Activated CD8-positive, alpha-beta memory T cell treated with anti-CD3 and anti-CD28 coated beads, Interleukin-2, amount 10 ng/mL, durations not matched to agents 7 days and 5 days (primary cell): ENCODE measurements at regions of chr6 and their contacts with region 1.

Region 1: DNA sequence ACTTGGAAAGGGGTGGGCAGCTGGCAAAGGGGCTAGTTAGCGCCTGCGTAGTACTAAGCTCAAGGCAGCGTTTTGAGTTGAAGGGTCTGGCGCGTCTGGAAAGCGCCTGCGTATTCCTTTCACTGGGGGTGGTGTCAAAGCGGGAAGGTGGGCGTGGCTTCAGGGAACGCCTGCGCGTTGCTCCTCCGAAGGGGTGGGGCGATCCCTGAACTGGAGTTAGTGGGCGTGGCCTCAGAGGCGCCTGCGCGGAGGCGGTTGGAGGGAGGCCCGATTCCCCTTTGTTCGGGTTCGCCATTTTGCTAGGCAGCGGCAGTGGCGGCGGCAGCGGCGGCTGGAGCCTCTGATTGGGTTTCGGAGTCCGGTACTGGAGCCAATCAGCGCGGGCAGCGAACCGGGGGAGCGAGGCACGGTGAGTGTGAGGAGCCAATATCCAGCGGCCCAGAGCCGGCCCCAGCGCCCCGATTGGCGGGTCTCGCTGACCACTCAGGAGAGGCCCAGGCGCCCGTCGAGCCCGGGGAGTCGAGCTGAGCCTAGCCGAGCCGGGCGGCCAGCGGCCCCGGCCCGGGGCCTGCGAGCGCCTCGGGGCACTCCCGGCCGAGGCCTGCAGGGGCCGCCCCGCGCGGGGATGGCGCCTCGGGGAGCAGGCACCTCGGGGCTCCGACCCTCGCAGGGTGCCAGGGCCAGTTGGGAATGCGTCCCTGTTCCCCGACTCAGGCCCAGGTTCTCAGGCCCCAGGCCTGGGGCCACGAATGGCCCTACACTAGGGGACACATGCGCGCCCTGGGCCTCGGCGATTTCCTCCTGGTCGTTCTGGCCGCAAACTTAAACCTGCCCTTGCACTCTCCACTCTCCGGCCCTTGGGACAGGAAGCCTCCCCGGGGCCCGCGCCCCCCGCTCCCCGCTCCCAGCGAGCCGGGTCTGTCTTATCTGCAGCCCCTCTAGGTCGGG is at the start of gene NFYA:
- DNase-seq: peak; percentile 100
- ATAC-seq: peak; percentile 79
- H3K4me3 Mint-ChIP-seq: peak within 1 kb of the TSS; percentile 96
- H3K27ac Mint-ChIP-seq: peak within 1 kb of the TSS; percentile 99
- H3K4me1 Mint-ChIP-seq: peaks cover 60% of the 10 kb centered on the region
- H3K27me3 Mint-ChIP-seq: no peaks in the 10 kb centered on the region
- total RNA-seq, gene NFYA: 25.0 to 31.5 TPM

Region 2: GRCh38 chr6:41053041-41053440 is 19.9 kb before region 1 on chr6 and contains the start of gene APOBEC2:
- CTCF ChIA-PET with region 1: interaction called, 16 read pairs
- DNase-seq: peak; percentile 37
- ATAC-seq: no peak
- H3K4me3 Mint-ChIP-seq: no peak within 1 kb of the TSS
- H3K27ac Mint-ChIP-seq: peak within 1 kb of the TSS; percentile 61
- H3K4me1 Mint-ChIP-seq: peaks cover 11% of the 10 kb centered on the region
- H3K27me3 Mint-ChIP-seq: no peaks in the 10 kb centered on the region
- total RNA-seq, gene APOBEC2: not detected

Region 3: GRCh38 chr6:41150669-41151068 is 77.7 kb after region 1 on chr6:
- CTCF ChIA-PET with region 1: no interaction called
- DNase-seq: no peak
- ATAC-seq: no peak
- H3K4me3 Mint-ChIP-seq: no peak overlapping the region
- H3K27ac Mint-ChIP-seq: no peak overlapping the region
- H3K4me1 Mint-ChIP-seq: peaks cover 12% of the 10 kb centered on the region
- H3K27me3 Mint-ChIP-seq: peaks cover 10% of the 10 kb centered on the region